ENCODE measurements at regions of chr10 and their contacts with region 1.

Region 1: DNA sequence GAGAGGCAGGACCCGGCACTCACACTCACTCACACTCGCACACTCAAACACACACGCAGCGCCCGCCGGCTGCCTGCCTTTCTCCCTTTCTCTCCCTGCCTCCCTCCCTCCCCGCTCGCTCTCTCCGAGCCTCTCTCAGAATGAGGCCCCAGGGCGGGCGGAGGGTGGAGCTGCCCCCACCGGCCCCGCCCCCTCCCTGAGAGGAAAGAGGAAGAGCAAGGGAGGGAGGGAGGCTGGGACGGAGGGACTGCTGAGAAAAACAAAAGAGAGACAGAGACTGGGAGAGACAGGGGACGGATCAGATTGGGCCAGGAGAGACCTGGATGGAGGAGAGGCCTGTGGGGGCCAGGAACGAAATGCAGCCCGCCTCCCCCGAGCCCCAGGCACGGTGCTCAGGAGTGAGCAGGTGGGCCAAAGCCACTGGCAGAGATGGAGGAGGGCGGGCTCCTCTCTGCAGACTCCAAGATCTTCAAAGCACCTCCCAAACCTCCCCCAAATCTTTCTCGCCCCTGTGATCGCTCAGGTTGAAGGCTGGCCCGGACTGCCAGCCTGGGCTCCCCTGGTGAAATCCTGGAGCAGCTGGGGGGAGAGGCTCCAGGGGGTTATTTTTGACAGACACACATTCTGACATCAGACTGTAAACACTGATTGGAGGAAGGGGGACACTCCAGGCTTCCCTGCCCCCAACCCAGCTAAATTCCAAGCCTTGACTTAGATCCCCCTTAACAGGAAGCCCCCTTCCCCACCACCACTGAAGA is 5.1 kb downstream of the LDB1 start:
- DNase-seq: peak; percentile 73 to 76
- ATAC-seq: peak; percentile 67 to 87
- H3K4me3 ChIP-seq: peak overlapping the region; percentile 90
- H3K27ac ChIP-seq: peak overlapping the region; percentile 95 to 96
- H3K4me1 ChIP-seq: peaks cover 63% of the 10 kb centered on the region
- CTCF ChIP-seq: no peak
- EP300 ChIP-seq: no peak
- POLR2A ChIP-seq: peak; percentile 95
- RAD21 ChIP-seq: no peak

Region 2: GRCh38 chr10:102101152-102101551 is 13.9 kb before region 1 on chr10:
- CTCF ChIA-PET with region 1: interaction called, 55 read pairs
- POLR2A ChIA-PET with region 1: interaction called, 12 read pairs
- DNase-seq: peak in 1 of 2 experiments; percentile 57
- ATAC-seq: peak; percentile 80 to 93
- H3K4me3 ChIP-seq: no peak overlapping the region
- H3K27ac ChIP-seq: no peak overlapping the region
- H3K4me1 ChIP-seq: no peaks in the 10 kb centered on the region
- CTCF ChIP-seq: no peak
- EP300 ChIP-seq: no peak
- POLR2A ChIP-seq: no peak
- RAD21 ChIP-seq: peak in 1 of 2 experiments; percentile 24; a peak in 1 of 5 replicates

Region 3: DNA sequence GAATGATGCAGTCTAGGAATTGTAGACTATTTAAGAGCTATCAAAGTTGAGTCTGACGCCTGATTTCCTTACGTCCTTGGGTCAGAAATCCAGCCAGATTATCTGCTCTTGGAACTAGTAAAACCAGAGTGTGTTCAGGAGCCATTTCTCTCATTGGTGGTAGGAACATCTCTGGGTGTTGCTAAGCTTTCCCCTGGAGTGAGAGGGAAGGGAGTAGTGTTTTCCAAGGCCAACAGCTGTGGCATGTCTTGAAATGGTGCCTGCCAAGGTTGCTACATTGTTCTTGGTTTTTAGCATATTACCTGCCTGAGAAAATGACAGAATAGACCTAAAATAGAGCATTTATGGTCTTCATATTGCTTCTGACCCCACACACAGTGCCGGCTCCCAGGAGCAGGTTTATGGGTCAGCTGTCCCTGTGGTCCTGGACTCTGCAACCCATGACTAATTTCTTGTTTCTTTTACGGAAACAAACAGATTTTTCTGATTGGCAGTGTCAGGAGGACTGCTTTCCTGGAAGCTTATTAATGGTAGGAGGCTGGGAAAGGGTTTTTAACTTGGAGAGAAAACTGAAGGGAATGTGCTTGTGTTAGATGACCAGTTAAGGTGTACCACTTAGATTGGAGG is 147.8 kb after region 1 on chr10:
- CTCF ChIA-PET with region 1: no interaction called
- POLR2A ChIA-PET with region 1: no interaction called
- DNase-seq: no peak
- ATAC-seq: no peak
- H3K4me3 ChIP-seq: no peak overlapping the region
- H3K27ac ChIP-seq: no peak overlapping the region
- H3K4me1 ChIP-seq: no peaks in the 10 kb centered on the region
- CTCF ChIP-seq: no peak
- EP300 ChIP-seq: no peak
- POLR2A ChIP-seq: no peak
- RAD21 ChIP-seq: no peak

Region 4: GRCh38 chr10:104054430-104054829 is 1939.4 kb after region 1 on chr10:
- CTCF ChIA-PET with region 1: no interaction called
- POLR2A ChIA-PET with region 1: no interaction called
- DNase-seq: peak; percentile 36 to 54
- ATAC-seq: peak; percentile 72 to 74
- H3K4me3 ChIP-seq: no peak overlapping the region
- H3K27ac ChIP-seq: peak overlapping the region; percentile 63 to 79
- H3K4me1 ChIP-seq: peaks cover 61% of the 10 kb centered on the region
- CTCF ChIP-seq: no peak
- EP300 ChIP-seq: no peak
- POLR2A ChIP-seq: no peak
- RAD21 ChIP-seq: no peak